ENCODE measurements at regions of chrX and their contacts with region 1.

Region 1: DNA sequence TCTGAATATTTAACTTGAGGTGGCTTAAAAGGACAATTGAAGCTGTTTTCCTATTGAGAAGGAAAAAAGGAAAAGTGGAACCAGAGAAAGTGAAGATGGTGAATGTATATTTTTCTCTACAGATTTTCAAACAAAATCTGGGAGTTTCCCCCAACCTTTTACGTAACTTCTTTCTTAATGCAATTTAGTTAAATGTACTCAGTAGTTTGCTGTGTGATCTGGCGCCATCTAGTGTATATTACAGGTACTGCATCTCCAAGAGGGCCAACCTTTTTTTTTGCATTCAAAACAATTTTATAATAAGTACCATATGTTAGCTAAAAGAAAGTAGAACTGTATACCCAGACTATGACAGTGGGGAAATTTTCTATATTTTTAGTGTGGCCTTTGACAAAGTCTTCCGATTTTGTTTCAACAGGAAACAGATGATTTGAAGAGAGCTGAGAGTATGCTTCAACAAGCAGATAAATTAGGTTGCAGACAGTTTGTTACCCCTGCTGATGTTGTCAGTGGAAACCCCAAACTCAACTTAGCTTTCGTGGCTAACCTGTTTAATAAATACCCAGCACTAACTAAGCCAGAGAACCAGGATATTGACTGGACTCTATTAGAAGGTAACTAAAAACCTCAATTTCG is 82.0 kb downstream of the PLS3 start:
- DNase-seq: peak; percentile 45 to 69
- H3K4me3 ChIP-seq: no peak overlapping the region
- H3K4me1 ChIP-seq: peaks cover 27% of the 10 kb centered on the region
- H3K27me3 ChIP-seq: no peaks in the 10 kb centered on the region

Region 2: DNA sequence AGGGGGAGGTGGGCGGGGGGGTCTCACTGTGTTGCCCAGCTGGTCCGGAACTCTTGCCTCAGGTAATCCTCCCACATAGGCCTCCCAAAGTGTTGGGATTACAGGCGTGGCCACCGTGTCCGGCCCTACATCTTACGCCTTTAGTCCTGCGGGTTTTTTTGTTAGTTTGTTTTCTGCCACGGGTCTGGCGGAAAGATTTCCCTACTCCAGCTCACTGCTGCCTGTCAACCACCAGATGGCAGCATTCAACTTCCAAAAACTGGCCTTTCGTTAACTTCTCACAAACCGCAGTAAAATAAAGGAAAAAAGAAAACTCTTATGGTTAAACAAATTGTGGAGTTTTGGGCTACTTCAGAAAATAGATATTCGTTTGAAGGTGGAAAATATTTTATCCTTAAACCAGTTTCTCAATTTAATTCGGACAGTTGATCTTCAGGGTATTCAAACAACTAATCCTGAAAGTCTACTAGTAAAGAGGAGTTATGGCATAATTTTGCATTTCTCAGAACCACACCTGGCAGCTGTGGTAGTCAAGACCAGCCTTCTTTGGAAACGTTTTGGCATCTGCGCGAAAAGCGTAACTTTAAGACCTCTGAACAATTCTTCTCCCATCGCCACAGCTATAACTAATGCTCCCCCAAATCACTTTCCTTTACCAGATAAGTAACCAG is 312.4 kb before region 1 on chrX:
- in situ Hi-C with region 1: loop called (anchors 5 kb)
- DNase-seq: peak; percentile 70 to 79
- H3K4me3 ChIP-seq: no peak overlapping the region
- H3K4me1 ChIP-seq: peaks cover 5% of the 10 kb centered on the region
- H3K27me3 ChIP-seq: no peaks in the 10 kb centered on the region

Region 3: GRCh38 chrX:115696039-115696438 is 53.0 kb after region 1 on chrX:
- in situ Hi-C with region 1: no loop called
- DNase-seq: no peak
- H3K4me3 ChIP-seq: no peak overlapping the region
- H3K4me1 ChIP-seq: peaks cover 5% of the 10 kb centered on the region; the same call in 1 of the 2 replicates
- H3K27me3 ChIP-seq: no peaks in the 10 kb centered on the region